H1 (cell line): ENCODE measurements at regions of chr12 and their contacts with region 1.

Region 1: DNA sequence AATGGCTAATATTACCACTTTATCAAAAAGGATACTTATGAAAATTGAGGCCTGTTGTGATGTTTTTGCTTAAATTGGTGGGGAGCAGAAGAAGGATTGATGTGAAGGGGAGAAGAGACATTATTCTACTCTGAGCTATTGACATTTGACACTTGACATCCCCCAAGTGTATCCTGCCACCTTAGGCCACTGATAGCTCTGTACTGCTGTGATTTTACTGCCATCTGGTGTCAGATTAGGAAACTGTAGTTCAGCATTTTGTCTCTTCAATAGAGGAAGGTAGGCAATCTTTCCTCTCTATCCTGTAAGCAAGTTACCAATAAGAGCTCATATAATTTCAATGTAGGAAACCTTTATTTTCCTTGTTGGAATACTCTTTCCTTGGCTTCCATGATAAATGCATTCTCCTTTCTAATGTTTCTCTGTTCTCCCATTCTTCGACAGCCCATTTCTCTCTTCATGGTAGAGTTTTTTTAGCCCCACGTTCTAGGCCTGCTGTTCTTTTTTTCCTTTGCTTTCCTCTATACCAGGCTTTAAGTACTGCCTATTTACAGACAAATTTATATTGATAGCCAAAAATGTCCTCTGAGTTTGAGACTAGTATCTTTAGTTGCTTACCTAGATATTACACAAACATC is 46.3 kb downstream of the PPHLN1 start:
- DNase-seq: no peak
- H3K4me3 ChIP-seq: no peak overlapping the region
- H3K27ac ChIP-seq: no peak overlapping the region
- H3K4me1 ChIP-seq: peaks cover 0 to 9% (median 5%) of the 10 kb centered on the region in 4 experiments; a peak in 5 of 7 replicates
- H3K27me3 ChIP-seq: no peaks in the 10 kb centered on the region
- CTCF ChIP-seq: peak in 2 of 3 experiments; percentile 83 to 86; a peak in 3 of 4 replicates
- EP300 ChIP-seq: no peak
- POLR2A ChIP-seq: no peak
- RAD21 ChIP-seq: peak; percentile 95

Region 2: GRCh38 chr12:42129595-42130204 is 242.6 kb before region 1 on chr12:
- CTCF ChIA-PET with region 1: interaction called, 12 read pairs
- POLR2A ChIA-PET with region 1: interaction called, 3 read pairs
- DNase-seq: no peak
- H3K4me3 ChIP-seq: no peak overlapping the region
- H3K27ac ChIP-seq: no peak overlapping the region
- H3K4me1 ChIP-seq: peaks cover 0 to 9% (median 6%) of the 10 kb centered on the region in 4 experiments; a peak in 5 of 7 replicates
- H3K27me3 ChIP-seq: no peaks in the 10 kb centered on the region
- CTCF ChIP-seq: peak in 2 of 3 experiments; percentile 65 to 67; a peak in 3 of 4 replicates
- EP300 ChIP-seq: no peak
- POLR2A ChIP-seq: no peak
- RAD21 ChIP-seq: peak; percentile 93

Region 3: GRCh38 chr12:42143401-42144157 is 228.7 kb before region 1 on chr12:
- CTCF ChIA-PET with region 1: interaction called, 10 read pairs
- POLR2A ChIA-PET with region 1: interaction called, 6 read pairs
- DNase-seq: no peak
- H3K4me3 ChIP-seq: peak overlapping the region; percentile 60 to 83 (median 80)
- H3K27ac ChIP-seq: no peak overlapping the region
- H3K4me1 ChIP-seq: peaks cover 4 to 12% (median 8%) of the 10 kb centered on the region in 4 experiments; a peak in 5 of 7 replicates
- H3K27me3 ChIP-seq: peaks cover 0 to 11% (median 0%) of the 10 kb centered on the region in 4 experiments; a peak in 3 of 7 replicates
- CTCF ChIP-seq: no peak
- EP300 ChIP-seq: no peak
- POLR2A ChIP-seq: no peak
- RAD21 ChIP-seq: no peak

Region 4: DNA sequence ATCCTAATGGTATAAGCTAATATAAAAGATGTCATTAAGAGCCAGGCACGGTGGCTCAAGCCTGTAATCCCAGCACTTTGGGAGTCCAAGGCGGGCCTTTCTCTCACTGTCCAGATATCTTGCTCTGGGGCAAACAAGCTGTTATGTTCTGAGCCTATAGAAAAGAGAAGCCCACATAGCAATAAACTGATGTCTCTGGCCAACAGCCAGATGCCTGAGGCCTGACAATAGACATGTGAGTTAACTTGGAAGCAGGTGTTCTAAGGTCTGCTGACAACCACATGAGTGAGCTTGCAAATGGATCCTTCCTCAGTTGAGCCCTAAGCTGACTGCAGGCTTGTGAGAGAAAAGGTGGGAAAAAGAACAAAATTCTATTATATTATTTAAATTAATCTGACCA is 159.2 kb before region 1 on chr12:
- CTCF ChIA-PET with region 1: no interaction called
- POLR2A ChIA-PET with region 1: no interaction called
- DNase-seq: no peak
- H3K4me3 ChIP-seq: no peak overlapping the region
- H3K27ac ChIP-seq: no peak overlapping the region
- H3K4me1 ChIP-seq: no peaks in the 10 kb centered on the region
- H3K27me3 ChIP-seq: no peaks in the 10 kb centered on the region
- CTCF ChIP-seq: no peak
- EP300 ChIP-seq: no peak
- POLR2A ChIP-seq: no peak
- RAD21 ChIP-seq: no peak

Region 5: GRCh38 chr12:42238240-42239140 is 133.8 kb before region 1 on chr12 and contains the start of gene YAF2:
- CTCF ChIA-PET with region 1: interaction called, 11 read pairs
- POLR2A ChIA-PET with region 1: no interaction called
- DNase-seq: peak in 1 of 2 experiments; percentile 82
- H3K4me3 ChIP-seq: peak within 1 kb of the TSS; percentile 34 to 63 (median 59)
- H3K27ac ChIP-seq: no peak within 1 kb of the TSS
- H3K4me1 ChIP-seq: peaks cover 0 to 4% (median 2%) of the 10 kb centered on the region in 4 experiments; a peak in 2 of 7 replicates
- H3K27me3 ChIP-seq: peaks cover 46 to 89% (median 73%) of the 10 kb centered on the region in 4 experiments
- CTCF ChIP-seq: no peak
- EP300 ChIP-seq: no peak
- POLR2A ChIP-seq: no peak
- RAD21 ChIP-seq: no peak
- total RNA-seq, gene YAF2: 2.2 and 2.7 TPM in 2 replicates

Region 6: DNA sequence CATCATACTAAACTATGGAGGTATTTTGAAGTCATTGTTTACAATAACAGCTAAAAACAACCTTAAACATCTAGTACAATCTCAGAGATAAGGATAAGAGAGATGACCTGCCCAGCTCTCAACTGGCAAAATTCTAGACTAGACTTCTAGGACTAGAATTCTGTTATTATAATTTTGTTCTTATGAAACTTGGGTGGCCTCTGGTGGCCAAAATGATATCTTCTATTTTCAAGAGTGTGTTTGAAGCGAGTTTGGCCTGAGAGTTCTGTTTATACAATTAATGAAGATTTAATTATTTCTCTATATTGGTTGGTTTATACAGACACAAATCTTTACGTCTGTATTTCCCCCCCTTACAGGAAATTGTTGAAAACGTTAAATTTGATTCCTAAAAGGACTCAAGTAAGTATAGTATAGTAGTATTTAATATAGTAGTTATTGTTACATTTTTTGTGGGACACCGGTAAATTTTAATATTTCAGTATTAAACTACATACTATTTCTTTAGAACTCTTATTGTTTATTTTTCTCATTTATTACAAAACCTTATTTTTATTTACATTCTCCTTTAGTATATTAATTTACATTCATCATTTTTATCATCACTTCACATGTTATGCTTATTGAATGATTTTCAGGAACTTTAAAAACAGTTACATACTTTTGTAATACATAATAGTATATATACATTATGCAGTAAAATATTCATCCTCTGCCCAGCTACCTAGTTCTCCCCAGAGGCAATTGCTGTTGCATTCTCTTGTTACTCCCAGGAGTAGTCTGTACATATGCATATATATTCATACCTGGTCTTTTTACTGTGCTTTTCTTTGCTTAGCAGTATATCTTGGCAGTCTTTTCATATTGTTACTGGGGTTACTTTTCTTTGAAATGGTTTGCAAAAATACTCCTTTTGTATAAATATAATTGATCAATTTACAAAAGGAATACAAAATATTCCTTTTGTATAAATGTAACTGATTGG is 39.7 kb before region 1 on chr12:
- CTCF ChIA-PET with region 1: interaction called, 11 read pairs
- POLR2A ChIA-PET with region 1: no interaction called
- DNase-seq: no peak
- H3K4me3 ChIP-seq: no peak overlapping the region
- H3K27ac ChIP-seq: no peak overlapping the region
- H3K4me1 ChIP-seq: no peaks in the 10 kb centered on the region; a peak in 2 of 7 replicates
- H3K27me3 ChIP-seq: no peaks in the 10 kb centered on the region
- CTCF ChIP-seq: peak in 1 of 3 experiments; percentile 24; a peak in 2 of 4 replicates
- EP300 ChIP-seq: no peak
- POLR2A ChIP-seq: no peak
- RAD21 ChIP-seq: peak; percentile 47 to 53